ENCODE measurements at regions of chr2 and their contacts with region 1.

Region 1: DNA sequence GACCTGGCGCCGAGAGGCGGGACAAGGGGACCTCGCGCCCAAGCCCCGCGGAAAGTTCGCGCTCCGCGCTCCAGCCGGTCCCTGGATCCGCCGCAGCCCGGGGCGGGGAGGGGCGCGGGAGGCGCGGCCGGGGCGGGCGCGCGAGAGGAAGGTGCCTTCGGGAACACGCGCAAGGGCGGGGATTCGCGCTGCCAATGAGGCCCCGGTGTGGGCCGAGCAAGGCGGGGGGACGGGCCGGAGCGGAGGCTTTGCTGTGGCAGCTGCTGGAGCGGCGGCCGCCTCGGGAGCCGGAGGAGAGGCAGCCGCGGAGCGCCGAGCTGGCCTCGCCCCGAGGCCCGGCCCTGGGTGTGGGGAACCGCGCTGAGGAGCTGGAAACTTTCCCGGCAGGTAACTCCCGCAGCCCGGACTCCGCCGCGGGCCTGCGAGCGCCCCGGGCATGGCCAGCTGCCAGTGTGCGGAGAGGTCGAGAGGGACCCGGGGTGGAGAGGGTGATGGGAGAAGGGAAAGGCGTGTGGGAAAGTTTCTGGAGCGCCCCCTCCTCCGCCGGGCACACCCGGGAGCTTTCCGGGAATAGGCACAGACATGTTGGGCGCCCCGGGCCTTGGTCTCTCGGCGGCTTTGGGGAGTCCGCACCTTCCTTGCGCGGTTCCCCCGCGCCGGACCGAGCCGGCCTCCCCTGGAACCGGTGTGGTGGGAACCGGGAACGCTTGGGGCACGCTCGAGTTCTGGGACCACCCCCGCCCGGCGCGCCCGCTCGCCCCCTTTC is at the start of gene TANC1:
- DNase-seq: peak; percentile 77 to 97
- H3K4me3 ChIP-seq: peak within 1 kb of the TSS; percentile 92 to 98
- H3K27ac ChIP-seq: peak within 1 kb of the TSS; percentile 86 to 93
- H3K4me1 ChIP-seq: peaks cover 3 to 20% of the 10 kb centered on the region in 2 donors
- H3K27me3 ChIP-seq: no peaks in the 10 kb centered on the region
- CTCF ChIP-seq: no peak
- total RNA-seq, gene TANC1: 45.4 TPM

Region 2: DNA sequence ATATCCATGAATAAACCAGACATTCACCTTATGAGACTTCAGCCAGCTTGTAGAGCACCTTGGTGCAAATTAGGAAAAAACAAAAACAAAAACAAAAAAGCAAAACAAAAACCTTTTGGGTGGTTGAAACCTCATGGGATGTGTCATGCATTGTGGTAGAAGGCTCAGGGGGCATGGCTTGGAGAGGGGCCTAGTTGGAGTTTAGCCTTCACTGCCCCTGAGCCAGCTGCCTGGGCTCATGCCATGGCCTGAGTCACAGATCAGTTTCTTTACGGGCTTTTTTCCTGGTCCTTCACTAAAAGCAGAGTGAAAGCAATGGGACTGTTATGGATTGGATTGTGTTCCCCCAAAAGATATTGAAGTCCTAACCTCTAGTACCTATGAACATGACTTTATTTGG is 195.5 kb before region 1 on chr2:
- intact Hi-C with region 1: loop called (anchors 10 kb)
- DNase-seq: peak in 1 of 2 donors; percentile 83
- H3K4me3 ChIP-seq: no peak overlapping the region
- H3K27ac ChIP-seq: peak overlapping the region; percentile 54 to 69
- H3K4me1 ChIP-seq: peaks cover 8 to 40% of the 10 kb centered on the region in 2 donors
- H3K27me3 ChIP-seq: no peaks in the 10 kb centered on the region
- CTCF ChIP-seq: no peak

Region 3: DNA sequence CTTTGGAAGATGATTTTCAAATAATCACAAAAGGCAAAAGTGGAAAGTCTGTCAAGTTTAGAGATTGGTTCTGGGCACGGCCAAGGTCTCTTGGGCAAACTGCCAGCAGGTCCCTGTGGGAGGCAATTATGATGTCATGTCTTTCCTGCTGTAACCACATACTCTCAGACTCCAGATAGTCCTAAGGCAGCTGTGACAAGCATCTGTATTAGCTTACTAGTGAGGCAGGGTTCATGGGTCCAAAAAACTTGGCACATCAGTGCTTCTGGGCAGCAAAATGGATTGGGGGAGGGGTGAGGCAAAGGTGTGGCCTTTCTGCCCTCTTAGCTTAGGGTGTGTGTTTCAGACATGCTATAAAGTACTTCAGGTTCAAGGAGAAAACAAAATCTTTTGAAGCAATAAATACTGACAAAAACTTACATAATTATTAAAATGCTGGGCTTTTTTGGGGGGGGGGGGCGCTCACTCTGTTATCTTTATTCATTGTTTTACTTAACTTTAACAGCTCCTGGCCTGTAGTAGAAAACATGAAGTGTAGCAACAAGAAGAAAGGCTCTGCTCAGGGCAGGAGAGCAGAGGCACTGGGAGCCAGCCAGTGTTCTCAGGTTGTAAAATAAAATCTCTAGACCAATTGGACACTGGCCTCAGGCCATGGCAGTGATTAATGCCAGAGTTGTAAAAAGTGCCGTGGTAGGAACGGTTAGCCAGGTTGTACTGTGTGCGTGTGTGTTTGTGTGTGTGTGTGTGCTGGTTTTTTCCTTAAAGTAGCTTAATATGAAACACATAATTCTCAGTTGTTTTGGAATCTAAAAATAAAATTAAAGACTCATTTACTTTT is 14.4 kb before region 1 on chr2:
- intact Hi-C with region 1: loop called (anchors 1 kb)
- DNase-seq: peak in 1 of 2 donors; percentile 89
- H3K4me3 ChIP-seq: no peak overlapping the region
- H3K27ac ChIP-seq: peak overlapping the region; percentile 63 to 69
- H3K4me1 ChIP-seq: peaks cover 0 to 16% of the 10 kb centered on the region in 2 donors
- H3K27me3 ChIP-seq: no peaks in the 10 kb centered on the region
- CTCF ChIP-seq: no peak

Region 4: GRCh38 chr2:158990397-158991209 is 22.0 kb after region 1 on chr2:
- intact Hi-C with region 1: no loop called
- DNase-seq: no peak
- H3K4me3 ChIP-seq: no peak overlapping the region
- H3K27ac ChIP-seq: no peak overlapping the region
- H3K4me1 ChIP-seq: peaks cover 0 to 16% of the 10 kb centered on the region in 2 donors
- H3K27me3 ChIP-seq: no peaks in the 10 kb centered on the region
- CTCF ChIP-seq: no peak

Region 5: DNA sequence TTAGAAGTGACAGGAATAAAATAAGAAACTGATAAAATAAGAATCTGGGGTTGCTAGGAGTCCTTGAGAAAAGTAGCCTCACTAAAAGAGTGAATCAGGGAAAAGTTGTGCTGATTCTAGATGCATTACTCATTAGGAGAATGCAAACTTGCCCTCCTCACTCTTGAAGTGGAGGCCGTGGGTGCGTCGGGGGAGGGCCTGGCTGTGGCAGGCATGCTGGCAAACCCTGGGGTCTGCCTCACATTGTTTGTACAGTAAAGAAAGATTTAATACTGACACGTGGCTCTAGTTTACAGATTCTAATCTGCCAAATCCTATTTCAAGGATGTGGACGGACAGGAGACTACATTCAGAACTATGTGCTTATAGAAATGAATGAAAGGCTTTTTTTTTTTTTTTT is 41.8 kb after region 1 on chr2:
- intact Hi-C with region 1: loop called (anchors 2 kb)
- DNase-seq: no peak
- H3K4me3 ChIP-seq: no peak overlapping the region
- H3K27ac ChIP-seq: peak overlapping the region; percentile 43 to 60
- H3K4me1 ChIP-seq: peaks cover 0 to 25% of the 10 kb centered on the region in 2 donors
- H3K27me3 ChIP-seq: no peaks in the 10 kb centered on the region
- CTCF ChIP-seq: no peak

Region 6: GRCh38 chr2:159044804-159045286 is 76.3 kb after region 1 on chr2:
- intact Hi-C with region 1: loop called (anchors 5 kb)
- DNase-seq: no peak
- H3K4me3 ChIP-seq: no peak overlapping the region
- H3K27ac ChIP-seq: peak overlapping the region in 1 of 2 donors; percentile 20
- H3K4me1 ChIP-seq: peaks cover 13 to 54% of the 10 kb centered on the region in 2 donors
- H3K27me3 ChIP-seq: no peaks in the 10 kb centered on the region
- CTCF ChIP-seq: no peak

Region 7: GRCh38 chr2:159118115-159118858 is 149.7 kb after region 1 on chr2:
- intact Hi-C with region 1: loop called (anchors 1 kb)
- DNase-seq: peak in 1 of 2 donors; percentile 92
- H3K4me3 ChIP-seq: no peak overlapping the region
- H3K27ac ChIP-seq: no peak overlapping the region
- H3K4me1 ChIP-seq: peaks cover 0 to 2% of the 10 kb centered on the region in 2 donors
- H3K27me3 ChIP-seq: no peaks in the 10 kb centered on the region
- CTCF ChIP-seq: peak; percentile 78 to 91 (median 80)